ENCODE measurements at regions of chr10 and their contacts with region 1.

Region 1: DNA sequence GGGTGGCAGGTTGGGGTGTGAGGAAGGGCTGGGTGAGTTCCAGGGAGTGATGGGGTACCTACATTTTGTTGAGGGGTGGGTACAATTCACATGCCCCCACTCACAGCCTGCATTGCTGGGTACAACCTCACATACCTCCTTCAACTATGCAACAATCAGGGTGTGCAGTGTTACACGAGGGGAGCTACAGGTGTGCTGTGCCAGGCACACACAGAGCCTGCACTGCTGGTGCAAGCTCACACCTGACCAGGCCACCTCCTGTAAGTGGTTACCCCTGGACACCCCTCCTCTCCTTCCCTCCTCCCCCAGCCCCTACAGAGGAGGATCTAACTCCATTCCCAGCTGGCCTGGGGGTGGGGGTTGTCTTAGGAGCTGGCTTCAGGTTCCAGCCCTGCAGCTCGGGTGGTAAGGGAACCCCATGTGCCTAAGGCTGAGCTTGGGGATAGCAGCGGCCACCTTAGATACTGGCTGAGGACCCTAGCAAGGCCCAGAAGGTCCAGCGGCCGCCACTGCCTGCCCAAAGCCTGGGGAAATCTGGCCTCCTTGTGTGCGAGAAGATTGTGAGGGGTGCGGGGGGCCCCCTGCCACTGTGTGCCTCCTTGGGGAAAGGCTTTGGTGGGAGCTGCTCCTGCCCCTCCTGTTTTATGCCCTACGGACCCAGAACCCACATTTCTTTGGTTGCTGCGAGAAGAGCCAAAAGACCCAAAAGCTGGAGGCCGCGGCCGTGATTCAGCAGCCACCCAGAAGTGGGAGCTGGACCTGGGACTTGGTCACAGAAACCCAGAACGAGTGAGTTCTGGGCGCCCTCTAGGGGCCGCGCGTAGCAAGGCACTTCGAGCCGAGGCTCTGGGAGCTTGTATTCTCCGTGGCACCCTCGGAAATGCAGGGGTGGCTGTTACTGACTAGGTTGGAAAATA is 10.8 kb downstream of the TLX1 start:
- DNase-seq: peak; percentile 59 to 95 (median 86)
- ATAC-seq: peak; percentile 87 to 97 (median 96)
- H3K4me3 ChIP-seq: no peak overlapping the region
- H3K27ac ChIP-seq: no peak overlapping the region
- H3K4me1 ChIP-seq: no peaks in the 10 kb centered on the region
- H3K27me3 ChIP-seq: peaks cover 0 to 37% (median 12%) of the 10 kb centered on the region in 4 donors
- CTCF ChIP-seq: peak; percentile 94 to 96 (median 94)

Region 2: GRCh38 chr10:100508691-100509150 is 633.2 kb before region 1 on chr10:
- intact Hi-C with region 1: no loop called
- DNase-seq: no peak
- ATAC-seq: peak; percentile 35 to 81 (median 72)
- H3K4me3 ChIP-seq: no peak overlapping the region
- H3K27ac ChIP-seq: no peak overlapping the region
- H3K4me1 ChIP-seq: no peaks in the 10 kb centered on the region
- H3K27me3 ChIP-seq: no peaks in the 10 kb centered on the region
- CTCF ChIP-seq: peak in 2 of 4 donors; percentile 17 to 20

Region 3: GRCh38 chr10:101095542-101096213 is 46.2 kb before region 1 on chr10:
- intact Hi-C with region 1: loop called in 2 of 3 experiments (anchors 2 to 5 kb)
- DNase-seq: peak; percentile 56 to 85 (median 78)
- ATAC-seq: peak; percentile 84 to 98 (median 94)
- H3K4me3 ChIP-seq: no peak overlapping the region
- H3K27ac ChIP-seq: no peak overlapping the region
- H3K4me1 ChIP-seq: no peaks in the 10 kb centered on the region
- H3K27me3 ChIP-seq: no peaks in the 10 kb centered on the region
- CTCF ChIP-seq: peak; percentile 59 to 79 (median 70)